Left cardiac atrium (tissue), 4 donors: ENCODE measurements at regions of chr12 and their contacts with region 1.

Region 1: DNA sequence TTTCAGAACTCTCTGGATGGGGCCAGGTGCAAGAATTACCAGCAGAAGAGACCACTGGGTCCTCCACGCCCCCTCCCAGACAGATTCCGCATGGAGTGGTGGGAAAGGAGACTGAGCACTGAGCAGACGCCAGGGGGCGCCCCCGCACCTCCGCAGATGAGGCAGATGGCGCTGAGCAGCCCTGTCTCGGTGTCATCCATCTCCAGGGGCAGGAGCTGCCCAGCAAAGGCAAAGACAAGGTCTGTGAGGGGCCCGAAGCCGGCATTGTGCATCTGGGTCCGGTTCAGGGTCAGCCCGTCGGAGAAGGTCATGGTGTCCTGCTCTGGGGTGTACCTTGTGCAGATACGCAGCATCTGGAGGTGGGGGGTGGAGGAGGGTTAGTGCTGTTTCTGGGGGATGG is 6.3 kb upstream of the ITGB7 start:
- DNase-seq: peak; percentile 91
- ATAC-seq: peak; percentile 78 to 80

Region 2: GRCh38 chr12:53251477-53252348 is 38.4 kb after region 1 on chr12:
- intact Hi-C with region 1: loop called (anchors 5 kb)
- DNase-seq: peak; percentile 83
- ATAC-seq: peak; percentile 94 to 96

Region 3: GRCh38 chr12:53276511-53276910 is 63.2 kb after region 1 on chr12:
- intact Hi-C with region 1: no loop called
- DNase-seq: no peak
- ATAC-seq: no peak

Region 4: DNA sequence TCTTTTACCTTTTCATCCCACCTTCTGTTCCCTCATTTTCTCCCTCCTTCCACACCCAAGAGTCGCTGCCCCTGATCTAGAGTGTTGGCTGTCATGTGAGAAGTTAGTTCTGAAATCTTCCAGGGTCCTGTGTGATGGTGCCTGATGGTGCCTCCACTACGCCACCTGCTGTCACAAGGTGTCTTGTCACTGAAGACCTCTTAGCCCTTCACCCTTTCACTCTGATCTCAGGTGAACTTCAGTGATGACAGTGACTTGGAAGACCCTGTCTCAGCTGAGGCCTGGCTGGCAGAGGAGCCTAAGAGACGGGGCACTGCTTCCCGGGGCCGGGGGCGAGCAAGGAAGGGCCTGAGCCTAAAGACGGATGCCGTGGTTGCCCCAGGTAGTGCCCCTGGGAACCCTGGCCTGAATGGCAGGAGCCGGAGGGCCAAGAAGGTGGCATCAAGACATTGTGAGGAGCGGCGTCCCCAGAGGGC is 74.4 kb after region 1 on chr12:
- intact Hi-C with region 1: loop called (anchors 1 to 5 kb)
- DNase-seq: peak; percentile 82
- ATAC-seq: peak; percentile 82